H1 (cell line): ENCODE measurements at regions of chr3 and their contacts with region 1.

Region 1: GRCh38 chr3:101069901-101070798 is 76.9 kb upstream of the ABI3BP start:
- DNase-seq: peak; percentile 75 to 93
- H3K4me3 ChIP-seq: no peak overlapping the region
- H3K27ac ChIP-seq: no peak overlapping the region
- H3K4me1 ChIP-seq: no peaks in the 10 kb centered on the region
- H3K27me3 ChIP-seq: no peaks in the 10 kb centered on the region
- CTCF ChIP-seq: peak; percentile 90 to 98 (median 93)
- EP300 ChIP-seq: no peak
- POLR2A ChIP-seq: no peak
- RAD21 ChIP-seq: peak; percentile 80 to 86

Region 2: GRCh38 chr3:100893590-100893989 is 176.6 kb before region 1 on chr3:
- CTCF ChIA-PET with region 1: interaction called, 19 read pairs
- POLR2A ChIA-PET with region 1: no interaction called
- DNase-seq: peak; percentile 10 to 53
- H3K4me3 ChIP-seq: no peak overlapping the region
- H3K27ac ChIP-seq: no peak overlapping the region
- H3K4me1 ChIP-seq: no peaks in the 10 kb centered on the region
- H3K27me3 ChIP-seq: no peaks in the 10 kb centered on the region
- CTCF ChIP-seq: peak; percentile 66 to 82 (median 75)
- EP300 ChIP-seq: no peak
- POLR2A ChIP-seq: no peak
- RAD21 ChIP-seq: peak; percentile 92 to 95

Region 3: GRCh38 chr3:101195951-101196713 is 126.0 kb after region 1 on chr3:
- CTCF ChIA-PET with region 1: interaction called, 19 read pairs
- POLR2A ChIA-PET with region 1: no interaction called
- DNase-seq: no peak
- H3K4me3 ChIP-seq: no peak overlapping the region
- H3K27ac ChIP-seq: no peak overlapping the region
- H3K4me1 ChIP-seq: no peaks in the 10 kb centered on the region
- H3K27me3 ChIP-seq: no peaks in the 10 kb centered on the region
- CTCF ChIP-seq: peak in 2 of 3 experiments; percentile 47; a peak in 2 of 4 replicates
- EP300 ChIP-seq: no peak
- POLR2A ChIP-seq: no peak
- RAD21 ChIP-seq: peak; percentile 83 to 87

Region 4: GRCh38 chr3:101381809-101382208 is 311.7 kb after region 1 on chr3:
- CTCF ChIA-PET with region 1: interaction called, 14 read pairs
- POLR2A ChIA-PET with region 1: no interaction called
- DNase-seq: no peak
- H3K4me3 ChIP-seq: no peak overlapping the region
- H3K27ac ChIP-seq: no peak overlapping the region
- H3K4me1 ChIP-seq: peaks cover 3 to 6% (median 4%) of the 10 kb centered on the region in 4 experiments; a peak in 3 of 7 replicates
- H3K27me3 ChIP-seq: no peaks in the 10 kb centered on the region
- CTCF ChIP-seq: peak in 2 of 3 experiments; percentile 32 to 39; a peak in 2 of 4 replicates
- EP300 ChIP-seq: no peak
- POLR2A ChIP-seq: no peak
- RAD21 ChIP-seq: peak; percentile 70 to 76